ENCODE measurements at regions of chr9 and their contacts with region 1.

Region 1: DNA sequence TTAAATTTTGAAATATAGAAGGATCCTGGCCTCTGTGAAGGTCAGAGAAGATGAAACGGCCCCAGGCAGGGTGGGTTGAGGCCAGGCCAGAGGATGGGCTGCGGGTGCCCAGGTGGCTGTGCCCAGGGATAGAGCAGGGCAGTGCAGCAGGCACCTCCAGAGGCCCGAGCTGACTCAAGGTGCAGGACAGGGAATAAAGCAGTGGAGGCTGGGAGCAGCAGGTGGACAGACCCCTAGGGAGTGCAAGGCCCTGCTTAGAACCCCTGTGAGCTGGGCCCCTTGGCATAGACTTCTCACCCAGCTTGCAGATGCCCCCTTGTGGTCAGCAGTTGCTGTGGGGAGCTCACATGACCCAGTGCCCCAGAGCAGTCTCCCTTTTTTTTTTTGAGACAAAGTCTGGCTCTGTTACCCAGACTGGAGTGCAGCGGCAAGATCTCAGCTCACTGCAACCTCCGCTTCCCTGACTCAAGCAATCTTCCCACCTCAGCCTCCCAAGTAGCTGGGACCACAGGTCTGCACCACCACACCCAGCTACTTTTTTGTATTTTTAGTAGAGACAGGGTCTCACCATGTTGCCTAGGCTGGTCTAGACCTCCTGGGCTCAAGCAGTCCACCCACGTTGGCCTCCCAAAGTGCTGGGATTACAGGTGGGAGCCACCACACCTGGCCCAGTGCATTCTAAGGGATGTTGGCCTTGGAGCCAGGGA is 118.8 kb downstream of the WNK2 start:
- DNase-seq: peak; percentile 72 to 76
- ATAC-seq: no peak
- H3K4me3 ChIP-seq: no peak overlapping the region
- H3K27ac ChIP-seq: no peak overlapping the region
- H3K4me1 ChIP-seq: no peaks in the 10 kb centered on the region
- H3K27me3 ChIP-seq: no peaks in the 10 kb centered on the region

Region 2: GRCh38 chr9:92963831-92964626 is 338.7 kb before region 1 on chr9:
- intact Hi-C with region 1: no loop called
- DNase-seq: peak in 1 of 2 donors; percentile 64
- ATAC-seq: peak; percentile 31
- H3K4me3 ChIP-seq: no peak overlapping the region
- H3K27ac ChIP-seq: no peak overlapping the region
- H3K4me1 ChIP-seq: no peaks in the 10 kb centered on the region
- H3K27me3 ChIP-seq: no peaks in the 10 kb centered on the region

Region 3: DNA sequence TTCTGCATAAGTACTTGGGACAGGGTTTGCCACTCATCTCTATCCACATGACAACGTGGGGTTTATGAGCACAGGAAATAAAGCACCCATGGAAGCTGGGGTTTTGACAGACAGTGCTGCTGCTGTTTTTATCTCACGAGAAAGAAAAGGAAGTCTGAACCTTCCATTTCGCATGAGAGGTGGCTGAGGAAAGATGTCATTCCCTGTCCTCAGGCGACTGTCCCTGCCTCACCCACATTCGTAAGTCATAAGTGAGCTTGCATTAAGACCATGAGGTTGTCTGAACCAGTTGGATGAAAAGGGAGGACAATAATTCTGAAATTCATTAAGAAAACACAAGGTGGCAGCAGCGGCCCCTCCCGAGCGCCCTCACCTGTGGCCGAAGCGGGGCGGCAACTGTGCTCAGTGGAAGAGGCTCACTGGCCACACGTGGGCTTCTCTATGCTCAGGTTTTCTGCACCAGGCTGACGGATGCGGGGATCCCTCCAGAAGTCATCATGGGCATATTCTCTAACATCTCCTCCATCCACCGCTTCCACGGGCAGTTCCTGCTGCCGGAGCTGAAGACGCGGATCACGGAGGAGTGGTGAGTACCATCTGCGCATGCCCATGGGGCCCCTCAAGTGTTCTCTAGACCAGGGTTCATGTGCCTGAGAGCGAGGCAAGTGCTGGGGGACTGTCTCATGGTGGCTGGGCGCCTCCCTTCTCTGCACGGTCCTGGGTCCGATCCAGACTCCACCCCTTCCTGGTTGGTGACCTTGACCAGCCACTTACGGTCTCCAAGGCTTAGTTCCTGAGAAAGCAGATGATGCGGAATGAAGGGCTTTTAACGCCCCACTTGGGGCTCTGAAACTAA is 298.9 kb before region 1 on chr9:
- intact Hi-C with region 1: loop called (anchors 10 kb)
- DNase-seq: no peak
- ATAC-seq: peak; percentile 82
- H3K4me3 ChIP-seq: no peak overlapping the region
- H3K27ac ChIP-seq: no peak overlapping the region
- H3K4me1 ChIP-seq: no peaks in the 10 kb centered on the region
- H3K27me3 ChIP-seq: no peaks in the 10 kb centered on the region

Region 4: GRCh38 chr9:93108291-93109041 is 194.2 kb before region 1 on chr9:
- intact Hi-C with region 1: loop called in 1 of 2 experiments (anchors 2 kb)
- DNase-seq: peak; percentile 48 to 75
- ATAC-seq: no peak
- H3K4me3 ChIP-seq: no peak overlapping the region
- H3K27ac ChIP-seq: no peak overlapping the region
- H3K4me1 ChIP-seq: no peaks in the 10 kb centered on the region
- H3K27me3 ChIP-seq: no peaks in the 10 kb centered on the region

Region 5: DNA sequence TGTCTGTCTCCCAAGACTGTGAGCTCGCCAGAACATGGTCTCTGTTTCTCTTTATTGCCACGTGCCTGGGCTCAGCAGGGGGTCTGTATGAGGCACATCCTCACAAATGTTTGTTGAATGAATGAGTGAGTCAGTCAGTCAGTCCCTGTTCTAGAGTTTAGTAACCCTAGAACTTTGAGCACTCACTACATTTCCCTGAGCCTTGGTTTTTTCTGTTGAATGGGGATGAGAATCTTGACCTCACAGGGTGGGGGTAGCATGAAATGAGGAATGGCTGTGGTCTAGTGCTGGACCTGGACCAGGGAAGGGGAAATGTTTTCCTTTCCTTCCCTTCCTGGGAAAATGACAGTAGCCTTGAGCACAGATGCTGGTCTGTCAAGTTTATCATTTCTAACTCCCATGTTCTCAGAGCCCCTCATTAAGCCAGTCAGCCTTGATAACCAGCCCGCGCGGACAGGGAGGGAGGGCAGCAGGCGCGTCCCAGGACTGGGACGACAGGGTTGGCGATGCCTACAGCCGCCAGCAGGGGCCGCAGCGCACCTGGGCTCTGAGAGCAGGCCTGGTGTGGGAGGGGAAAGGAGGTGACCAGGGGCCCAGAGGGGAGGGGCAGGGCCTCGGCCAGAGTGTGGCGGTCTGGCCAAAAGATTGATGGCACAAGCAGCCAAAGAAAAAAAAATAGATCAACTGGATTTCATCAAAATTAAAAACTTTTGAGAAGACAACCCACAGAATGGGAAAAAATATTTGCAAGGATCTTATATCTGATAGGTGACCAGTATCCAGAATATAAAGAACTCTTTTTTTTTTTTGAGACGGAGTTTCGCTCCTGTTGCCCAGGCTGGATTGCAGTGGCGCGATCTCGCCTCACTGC is 142.9 kb before region 1 on chr9:
- intact Hi-C with region 1: loop called (anchors 1 to 2 kb)
- DNase-seq: peak; percentile 89 to 94
- ATAC-seq: peak; percentile 96
- H3K4me3 ChIP-seq: no peak overlapping the region
- H3K27ac ChIP-seq: no peak overlapping the region
- H3K4me1 ChIP-seq: no peaks in the 10 kb centered on the region
- H3K27me3 ChIP-seq: no peaks in the 10 kb centered on the region